CD8-positive, alpha-beta T cell (primary cell): ENCODE measurements at regions of chr7 and their contacts with region 1.

Region 1: DNA sequence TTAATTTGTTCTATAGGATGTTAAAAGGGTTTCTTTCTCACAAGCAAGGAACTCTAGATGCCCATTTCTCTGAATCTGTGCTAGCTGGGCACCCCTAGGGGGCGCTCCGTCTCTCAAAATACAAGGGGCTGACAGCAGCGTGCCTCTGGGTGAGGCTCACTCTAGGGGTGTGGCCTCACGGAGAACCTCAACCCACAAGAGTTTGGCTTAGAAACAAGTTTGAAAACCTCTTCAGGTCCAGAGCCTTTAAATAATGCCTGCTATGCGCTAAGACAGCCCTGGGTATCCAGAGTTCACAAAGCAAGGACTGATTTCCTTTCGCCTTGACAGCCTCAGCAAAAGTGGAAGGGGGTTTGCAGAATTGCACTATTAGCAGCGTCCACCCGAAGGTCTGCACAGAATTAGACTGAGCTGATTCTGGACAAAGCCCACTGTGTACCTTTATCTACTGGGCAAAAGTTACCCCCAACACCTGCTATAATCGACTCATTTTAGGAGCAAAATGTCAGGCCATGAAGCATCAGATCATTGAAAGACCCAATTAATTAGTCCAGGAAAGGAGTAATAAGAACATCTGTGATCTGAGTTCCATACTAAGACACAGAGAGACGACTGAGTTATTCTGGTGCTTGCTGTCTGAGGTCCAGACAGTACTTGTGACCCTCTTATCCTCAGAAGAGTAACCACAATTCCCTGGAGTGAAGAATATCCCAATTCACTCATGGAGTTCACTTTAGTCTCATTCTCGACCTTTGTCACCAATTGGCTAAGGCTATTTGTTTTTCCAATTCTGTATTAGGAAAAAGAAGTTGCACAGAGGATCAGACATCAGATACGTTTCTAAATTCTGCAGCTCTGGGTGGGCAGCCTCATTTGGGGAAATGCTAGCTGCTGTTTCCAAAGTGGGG is 574 bp upstream of the CPED1 start:
- DNase-seq: peak; percentile 67 to 92 (median 87)
- ATAC-seq: peak; percentile 99
- H3K4me3 ChIP-seq: peak overlapping the region in 1 of 2 experiments; percentile 6
- H3K4me3 Mint-ChIP-seq: peak overlapping the region; percentile 75
- H3K27ac ChIP-seq: no peak overlapping the region
- H3K27ac Mint-ChIP-seq: no peak overlapping the region
- H3K4me1 ChIP-seq: peaks cover 13% of the 10 kb centered on the region
- H3K4me1 Mint-ChIP-seq: peaks cover 18% of the 10 kb centered on the region
- H3K27me3 ChIP-seq: peaks cover 21 to 29% of the 10 kb centered on the region in 2 experiments
- H3K27me3 Mint-ChIP-seq: peaks cover 56% of the 10 kb centered on the region
- CTCF ChIP-seq: peak; percentile 98

Region 2: DNA sequence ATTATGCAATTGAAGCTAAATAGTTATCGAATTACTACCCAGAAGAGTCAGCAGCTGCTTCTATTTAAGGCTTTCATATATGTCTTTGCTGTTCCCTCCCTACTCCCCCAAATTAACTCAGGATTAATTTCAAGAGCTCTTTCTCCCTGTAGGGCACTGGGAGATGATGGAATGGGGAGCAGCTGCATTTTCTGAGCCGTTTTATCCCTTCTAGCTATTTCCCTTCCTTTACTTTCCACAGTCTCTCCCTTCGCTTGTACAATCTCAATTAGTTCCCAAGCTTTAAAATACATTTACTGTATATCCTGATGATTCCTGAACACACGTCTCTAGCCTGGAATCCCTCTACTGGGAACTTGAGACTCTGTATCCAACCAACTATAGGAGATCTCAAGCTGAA is 110.2 kb before region 1 on chr7:
- CTCF ChIA-PET with region 1: no interaction called
- POLR2A ChIA-PET with region 1: no interaction called
- intact Hi-C with region 1: no loop called
- DNase-seq: no peak
- ATAC-seq: no peak
- H3K4me3 ChIP-seq: no peak overlapping the region
- H3K4me3 Mint-ChIP-seq: no peak overlapping the region
- H3K27ac ChIP-seq: no peak overlapping the region
- H3K27ac Mint-ChIP-seq: no peak overlapping the region
- H3K4me1 ChIP-seq: no peaks in the 10 kb centered on the region
- H3K4me1 Mint-ChIP-seq: no peaks in the 10 kb centered on the region
- H3K27me3 ChIP-seq: no peaks in the 10 kb centered on the region
- H3K27me3 Mint-ChIP-seq: peaks cover 13% of the 10 kb centered on the region
- CTCF ChIP-seq: no peak

Region 3: DNA sequence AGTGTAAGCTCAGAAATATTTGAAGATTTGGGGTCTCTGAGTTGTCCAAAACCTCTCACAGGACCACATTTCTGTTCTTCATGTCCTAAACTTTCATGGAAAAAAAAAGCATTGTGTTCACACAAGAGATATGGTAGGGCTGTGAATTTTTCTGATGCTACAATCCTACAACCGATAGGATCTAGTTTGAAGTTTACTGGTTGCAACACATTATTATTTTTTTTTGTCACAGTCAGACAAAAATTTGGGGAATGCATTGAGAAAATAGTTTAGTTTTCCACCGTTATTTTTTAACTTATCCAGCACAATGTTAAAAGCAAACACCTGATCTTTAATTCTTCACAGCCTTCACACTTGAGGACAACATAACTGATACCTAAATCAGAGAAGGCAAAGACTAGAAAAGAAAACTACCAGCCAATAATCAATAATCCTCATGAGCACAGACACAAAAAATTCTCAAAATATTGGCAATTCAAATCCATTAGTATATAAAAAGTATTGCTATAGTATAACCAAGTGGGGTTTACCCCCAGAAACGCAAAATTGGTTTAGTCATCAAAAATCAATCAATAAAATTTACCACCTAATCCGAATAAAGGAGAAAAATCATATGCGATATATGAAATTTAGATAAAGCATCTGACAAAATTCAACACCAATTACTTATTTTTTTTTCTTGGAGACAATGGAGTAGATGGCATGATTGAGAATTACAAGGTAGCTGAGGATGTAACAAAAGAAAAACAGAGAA is 48.8 kb before region 1 on chr7:
- CTCF ChIA-PET with region 1: no interaction called
- POLR2A ChIA-PET with region 1: no interaction called
- intact Hi-C with region 1: no loop called
- DNase-seq: no peak
- ATAC-seq: no peak
- H3K4me3 ChIP-seq: no peak overlapping the region
- H3K4me3 Mint-ChIP-seq: no peak overlapping the region
- H3K27ac ChIP-seq: no peak overlapping the region
- H3K27ac Mint-ChIP-seq: no peak overlapping the region
- H3K4me1 ChIP-seq: no peaks in the 10 kb centered on the region
- H3K4me1 Mint-ChIP-seq: no peaks in the 10 kb centered on the region
- H3K27me3 ChIP-seq: no peaks in the 10 kb centered on the region
- H3K27me3 Mint-ChIP-seq: peaks cover 4% of the 10 kb centered on the region
- CTCF ChIP-seq: no peak

Region 4: DNA sequence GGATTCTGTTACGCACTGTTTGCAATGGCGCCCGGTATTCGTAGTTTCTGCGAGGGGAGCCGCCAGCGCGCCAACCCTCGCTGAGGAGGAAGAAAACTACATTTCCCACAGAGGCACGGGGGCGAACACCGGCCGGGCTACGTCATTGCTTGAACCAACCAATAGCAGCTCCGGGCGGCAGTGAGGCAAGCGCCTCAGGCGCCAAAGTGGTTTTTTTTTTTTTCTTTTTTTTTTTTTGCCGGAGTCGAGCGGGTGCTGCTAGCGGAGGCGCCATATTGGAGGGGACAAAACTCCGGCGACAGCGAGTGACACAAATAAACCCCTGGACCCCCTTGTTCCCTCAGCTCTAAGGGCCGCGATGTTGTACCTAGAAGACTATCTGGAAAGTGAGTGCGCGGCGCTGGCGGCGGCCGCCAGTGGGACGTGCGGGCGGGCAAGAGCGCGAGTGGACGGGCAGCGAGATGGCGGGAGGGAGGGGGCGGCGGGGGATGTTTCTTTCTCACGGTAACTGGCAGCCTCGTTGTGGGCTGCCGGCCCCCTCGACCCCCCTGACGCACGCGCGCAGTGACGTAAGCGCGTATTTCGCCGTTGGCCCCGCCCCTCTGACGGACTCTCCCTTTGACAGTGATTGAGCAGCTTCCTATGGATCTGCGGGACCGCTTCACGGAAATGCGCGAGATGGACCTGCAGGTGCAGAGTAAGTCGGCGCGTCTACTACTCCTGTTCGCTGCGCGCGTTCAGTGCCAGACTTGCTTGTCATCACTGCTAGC is 37.2 kb before region 1 on chr7 and contains the start of gene ING3:
- CTCF ChIA-PET with region 1: interaction called, 5 read pairs
- POLR2A ChIA-PET with region 1: interaction called, 3 read pairs
- intact Hi-C with region 1: loop called (anchors 1 to 5 kb)
- DNase-seq: peak; percentile 97 to 99 (median 98)
- ATAC-seq: peak; percentile 85
- H3K4me3 ChIP-seq: peak within 1 kb of the TSS; percentile 63 to 93
- H3K4me3 Mint-ChIP-seq: peak within 1 kb of the TSS; percentile 98
- H3K27ac ChIP-seq: peak within 1 kb of the TSS; percentile 96 to 98
- H3K27ac Mint-ChIP-seq: peak within 1 kb of the TSS; percentile 98
- H3K4me1 ChIP-seq: peaks cover 12% of the 10 kb centered on the region
- H3K4me1 Mint-ChIP-seq: peaks cover 34% of the 10 kb centered on the region
- H3K27me3 ChIP-seq: no peaks in the 10 kb centered on the region
- H3K27me3 Mint-ChIP-seq: peaks cover 22% of the 10 kb centered on the region
- CTCF ChIP-seq: no peak
- total RNA-seq, gene ING3: 51.3 to 53.7 TPM

Region 5: GRCh38 chr7:121000081-121000983 is 12.4 kb after region 1 on chr7:
- CTCF ChIA-PET with region 1: interaction called, 14 read pairs
- POLR2A ChIA-PET with region 1: interaction called, 3 read pairs
- intact Hi-C with region 1: loop called in 1 of 2 experiments (anchors 1 kb)
- DNase-seq: no peak
- ATAC-seq: no peak
- H3K4me3 ChIP-seq: no peak overlapping the region
- H3K4me3 Mint-ChIP-seq: no peak overlapping the region
- H3K27ac ChIP-seq: no peak overlapping the region
- H3K27ac Mint-ChIP-seq: no peak overlapping the region
- H3K4me1 ChIP-seq: peaks cover 17% of the 10 kb centered on the region
- H3K4me1 Mint-ChIP-seq: peaks cover 18% of the 10 kb centered on the region
- H3K27me3 ChIP-seq: no peaks in the 10 kb centered on the region
- H3K27me3 Mint-ChIP-seq: peaks cover 10% of the 10 kb centered on the region
- CTCF ChIP-seq: no peak

Region 6: GRCh38 chr7:121107923-121108498 is 120.1 kb after region 1 on chr7:
- CTCF ChIA-PET with region 1: interaction called, 35 read pairs
- POLR2A ChIA-PET with region 1: no interaction called
- intact Hi-C with region 1: loop called (anchors 1 to 2 kb)
- DNase-seq: peak in 2 of 9 experiments; percentile 55 to 64
- ATAC-seq: peak; percentile 79
- H3K4me3 ChIP-seq: no peak overlapping the region
- H3K4me3 Mint-ChIP-seq: no peak overlapping the region
- H3K27ac ChIP-seq: no peak overlapping the region
- H3K27ac Mint-ChIP-seq: no peak overlapping the region
- H3K4me1 ChIP-seq: no peaks in the 10 kb centered on the region
- H3K4me1 Mint-ChIP-seq: no peaks in the 10 kb centered on the region
- H3K27me3 ChIP-seq: no peaks in the 10 kb centered on the region
- H3K27me3 Mint-ChIP-seq: peaks cover 9% of the 10 kb centered on the region
- CTCF ChIP-seq: peak; percentile 87